Activated CD4-positive, alpha-beta memory T cell treated with anti-CD3 and anti-CD28 coated beads, Interleukin-2, amount 10 ng/mL, durations not matched to agents 7 days and 5 days (primary cell): ENCODE measurements at regions of chr9 and their contacts with region 1.

Region 1: GRCh38 chr9:32526041-32526706 is at the start of gene RIGI:
- DNase-seq: peak; percentile 83
- H3K4me3 Mint-ChIP-seq: peak within 1 kb of the TSS; percentile 96
- H3K27ac Mint-ChIP-seq: peak within 1 kb of the TSS; percentile 88
- H3K4me1 Mint-ChIP-seq: peaks cover 60% of the 10 kb centered on the region
- H3K27me3 Mint-ChIP-seq: no peaks in the 10 kb centered on the region
- total RNA-seq, gene RIGI: 32.4 to 33.7 TPM

Region 2: DNA sequence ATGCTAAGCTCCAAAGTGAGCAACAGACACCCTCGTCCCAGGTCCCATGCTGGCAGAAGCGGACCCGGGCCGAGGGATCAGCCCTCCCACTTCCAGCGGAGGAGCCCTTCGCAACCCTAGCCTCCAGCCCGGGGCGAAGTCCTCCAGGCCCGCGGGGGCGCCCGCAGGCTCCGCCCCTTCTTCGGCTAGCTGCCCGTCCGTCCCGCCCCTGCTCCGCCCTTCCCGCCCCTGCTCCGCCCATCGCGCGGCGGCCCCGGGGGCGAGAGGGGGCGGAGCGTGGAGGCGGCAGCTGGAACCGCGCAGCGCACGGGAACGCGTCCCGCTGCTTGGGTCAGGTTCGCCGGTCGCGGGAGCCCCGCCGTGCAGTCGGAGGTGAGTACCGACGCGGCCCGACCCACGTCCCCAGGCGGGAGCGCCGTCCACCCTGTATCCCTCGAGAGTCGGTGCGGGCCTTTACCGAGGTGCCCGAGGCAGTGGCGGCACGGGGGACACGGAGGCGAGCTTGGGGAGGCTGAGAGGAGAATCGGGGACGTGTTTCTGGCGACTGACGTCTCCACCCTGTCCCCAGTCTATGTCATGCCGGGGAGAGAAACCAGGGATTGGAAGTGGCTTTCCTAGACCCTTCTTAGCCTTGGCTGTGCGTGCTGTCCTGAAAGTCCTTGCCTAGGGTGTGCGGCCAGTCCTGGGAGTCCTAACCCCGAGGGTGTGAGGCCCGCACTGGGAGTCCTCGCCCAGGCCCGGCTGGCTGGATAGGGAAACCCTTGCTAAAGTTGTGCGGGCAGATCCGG is 141.6 kb before region 1 on chr9 and contains the start of gene ACO1:
- CTCF ChIA-PET with region 1: interaction called, 71 read pairs
- POLR2A ChIA-PET with region 1: interaction called, 12 read pairs
- DNase-seq: peak; percentile 87
- H3K4me3 Mint-ChIP-seq: peak within 1 kb of the TSS; percentile 75
- H3K27ac Mint-ChIP-seq: no peak within 1 kb of the TSS
- H3K4me1 Mint-ChIP-seq: peaks cover 8% of the 10 kb centered on the region
- H3K27me3 Mint-ChIP-seq: peaks cover 35% of the 10 kb centered on the region
- total RNA-seq, gene ACO1: 6.4 to 6.6 TPM

Region 3: DNA sequence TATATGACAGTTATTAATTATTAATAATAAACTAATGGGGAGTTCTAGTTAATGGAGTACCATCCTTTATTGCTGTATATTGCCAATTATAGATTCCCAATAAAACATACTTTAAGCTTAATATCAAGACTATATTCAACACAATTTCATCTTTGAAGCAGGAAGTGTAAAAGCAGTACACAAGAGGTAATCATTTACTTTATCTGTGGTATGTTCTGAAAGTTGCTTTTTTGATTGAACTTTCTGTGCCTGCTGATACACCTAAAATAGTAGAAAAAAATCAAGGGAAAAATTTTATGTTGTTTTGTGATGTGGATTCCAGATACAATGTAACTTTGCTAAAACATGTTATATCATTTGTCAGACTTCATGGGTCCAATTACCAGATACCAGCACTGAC is 83.7 kb before region 1 on chr9:
- CTCF ChIA-PET with region 1: no interaction called
- POLR2A ChIA-PET with region 1: no interaction called
- DNase-seq: no peak
- H3K4me3 Mint-ChIP-seq: no peak overlapping the region
- H3K27ac Mint-ChIP-seq: no peak overlapping the region
- H3K4me1 Mint-ChIP-seq: no peaks in the 10 kb centered on the region
- H3K27me3 Mint-ChIP-seq: no peaks in the 10 kb centered on the region

Region 4: DNA sequence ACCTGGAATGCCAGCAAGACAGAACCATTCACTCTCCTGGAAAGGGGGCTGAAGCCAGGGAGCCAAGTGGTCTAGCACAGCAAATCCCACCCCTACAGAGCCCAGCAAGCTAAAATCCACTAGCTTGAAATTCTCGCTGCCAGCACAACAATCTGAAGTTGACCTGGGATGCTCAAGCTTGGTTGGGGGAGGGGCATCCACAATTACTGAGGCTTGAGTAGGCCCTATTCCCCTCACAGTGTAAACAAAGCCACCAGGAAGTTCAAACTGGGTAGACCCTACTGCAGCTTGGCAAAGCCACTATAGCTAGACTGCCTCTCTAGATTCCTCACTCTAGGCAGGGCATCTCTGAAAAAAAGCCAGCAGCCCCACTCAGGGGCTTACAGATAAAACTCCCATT is 17.4 kb before region 1 on chr9:
- CTCF ChIA-PET with region 1: interaction called, 18 read pairs
- POLR2A ChIA-PET with region 1: interaction called, 6 read pairs
- DNase-seq: no peak
- H3K4me3 Mint-ChIP-seq: no peak overlapping the region
- H3K27ac Mint-ChIP-seq: no peak overlapping the region
- H3K4me1 Mint-ChIP-seq: peaks cover 33% of the 10 kb centered on the region
- H3K27me3 Mint-ChIP-seq: no peaks in the 10 kb centered on the region